Posterior cingulate gyrus (tissue), 11 donors: ENCODE measurements at regions of chr20 and their contacts with region 1.

Region 1: DNA sequence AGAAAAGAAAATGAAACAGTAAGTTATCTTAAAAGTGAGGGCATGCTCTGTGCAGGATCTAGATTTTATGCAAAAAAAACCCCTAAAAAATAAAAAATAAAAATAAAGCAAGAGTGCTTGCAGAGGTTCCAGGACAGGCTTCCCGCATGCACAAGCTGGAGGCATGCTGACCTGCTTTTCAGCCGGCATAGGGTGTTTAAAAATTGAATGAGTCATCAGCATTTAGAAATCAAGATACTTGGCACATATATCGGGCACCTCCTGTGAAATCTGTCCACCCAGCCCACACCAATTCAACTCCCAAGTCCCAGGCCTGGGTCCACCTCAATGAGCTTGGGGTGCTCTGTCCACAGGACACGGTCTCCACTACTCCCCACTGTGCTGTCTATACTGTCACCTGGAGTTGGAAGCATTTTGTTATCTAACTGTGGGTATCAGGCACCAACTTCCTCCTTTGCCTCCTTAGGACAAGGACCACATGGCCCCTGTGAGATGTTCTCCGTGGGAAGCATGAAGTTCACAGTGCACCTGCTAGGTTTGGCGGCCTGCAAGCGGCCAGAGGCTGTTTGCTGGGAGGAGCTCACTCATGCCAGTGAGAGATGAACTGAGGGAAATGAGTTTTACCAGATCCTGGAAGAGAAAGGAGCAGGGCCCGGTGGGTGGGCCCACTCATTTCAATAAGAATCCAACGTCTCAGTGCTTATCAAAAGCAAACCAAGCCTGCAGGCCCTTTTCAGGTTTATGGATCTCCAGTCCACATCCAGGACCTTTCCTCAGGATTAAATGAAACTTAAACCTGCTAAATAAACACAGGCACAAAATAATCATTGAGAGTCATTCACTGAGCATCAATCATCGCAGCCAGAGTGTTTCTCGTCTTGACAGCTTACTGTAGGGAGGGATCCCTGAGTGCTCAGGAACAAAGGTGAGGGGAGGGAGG is 121.1 kb downstream of the FOXA2 start:
- DNase-seq: peak in 1 of 10 donors; percentile 6

Region 2: GRCh38 chr20:22403632-22404361 is 59.4 kb before region 1 on chr20:
- intact Hi-C with region 1: loop called (anchors 10 kb)
- DNase-seq: no peak

Region 3: DNA sequence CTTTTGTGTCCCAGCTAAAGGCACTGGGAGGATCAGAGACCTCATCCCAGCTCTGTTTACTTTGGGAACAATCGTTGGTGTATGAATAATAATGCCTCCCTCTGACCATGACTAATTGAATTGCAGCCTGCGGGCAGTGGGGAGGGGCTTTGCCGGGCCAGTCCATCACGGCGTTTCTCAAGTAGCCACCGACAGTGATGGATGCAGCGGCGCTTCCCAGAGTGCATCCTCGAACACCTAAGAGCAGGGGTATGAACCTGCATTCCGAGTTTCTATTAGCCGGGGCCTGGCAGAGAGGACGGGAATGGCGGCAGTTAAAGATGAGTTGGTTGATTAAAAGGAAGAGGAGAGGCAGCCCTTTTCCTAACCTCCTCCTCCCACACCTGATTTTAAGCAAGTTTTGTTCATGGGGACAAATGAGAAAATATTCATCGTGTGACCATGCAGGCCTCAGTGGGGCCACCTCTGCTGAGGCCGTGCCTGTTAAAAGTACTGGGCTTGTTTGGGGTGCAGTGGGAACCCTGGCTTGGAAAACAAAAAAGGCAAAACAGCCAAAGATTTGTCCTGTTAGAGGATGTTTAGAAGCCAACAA is 33.0 kb before region 1 on chr20:
- intact Hi-C with region 1: no loop called
- DNase-seq: no peak